ENCODE measurements at regions of chr13 and their contacts with region 1.

Region 1: GRCh38 chr13:46492946-46493345 is 60.0 kb upstream of the LRCH1 start:
- DNase-seq: no peak
- H3K4me3 ChIP-seq: no peak overlapping the region
- H3K27me3 ChIP-seq: peaks cover 2% of the 10 kb centered on the region
- CTCF ChIP-seq: peak; percentile 62

Region 2: DNA sequence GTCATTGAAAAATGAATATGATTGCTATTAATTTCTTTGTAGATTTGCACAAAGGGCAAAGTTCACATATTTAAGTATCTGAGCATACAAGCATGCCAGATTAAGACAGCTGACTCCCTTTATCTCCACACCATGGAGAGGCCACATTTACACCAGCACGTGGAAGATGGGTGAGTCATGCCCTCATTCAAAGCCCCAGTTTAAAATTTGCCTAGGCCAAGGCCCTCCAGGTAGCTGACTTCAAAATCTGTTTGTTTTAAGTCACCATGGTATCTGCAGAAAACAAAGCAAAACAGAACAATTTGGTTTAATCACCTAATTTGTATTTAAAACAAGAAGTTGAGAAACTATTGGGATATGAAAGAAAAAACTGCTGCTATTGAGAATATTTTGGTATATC is 194.9 kb after region 1 on chr13:
- CTCF ChIA-PET with region 1: interaction called, 3 read pairs
- POLR2A ChIA-PET with region 1: interaction called, 10 read pairs
- DNase-seq: no peak
- H3K4me3 ChIP-seq: no peak overlapping the region
- H3K27me3 ChIP-seq: no peaks in the 10 kb centered on the region
- CTCF ChIP-seq: no peak

Measured in BJ (cell line).